Caco-2 (cell line): ENCODE measurements at regions of chr5 and their contacts with region 1.

Region 1: GRCh38 chr5:36646507-36647023 is 40.2 kb downstream of the SLC1A3 start:
- DNase-seq: peak in 1 of 2 experiments; percentile 33
- H3K4me3 ChIP-seq: no peak overlapping the region
- H3K4me3 Mint-ChIP-seq: peak overlapping the region; percentile 53
- H3K27ac Mint-ChIP-seq: peak overlapping the region; percentile 81
- H3K4me1 ChIP-seq: peaks cover 91% of the 10 kb centered on the region
- H3K4me1 Mint-ChIP-seq: peaks cover 42% of the 10 kb centered on the region
- H3K27me3 ChIP-seq: no peaks in the 10 kb centered on the region
- H3K27me3 Mint-ChIP-seq: no peaks in the 10 kb centered on the region
- CTCF ChIP-seq: no peak

Region 2: DNA sequence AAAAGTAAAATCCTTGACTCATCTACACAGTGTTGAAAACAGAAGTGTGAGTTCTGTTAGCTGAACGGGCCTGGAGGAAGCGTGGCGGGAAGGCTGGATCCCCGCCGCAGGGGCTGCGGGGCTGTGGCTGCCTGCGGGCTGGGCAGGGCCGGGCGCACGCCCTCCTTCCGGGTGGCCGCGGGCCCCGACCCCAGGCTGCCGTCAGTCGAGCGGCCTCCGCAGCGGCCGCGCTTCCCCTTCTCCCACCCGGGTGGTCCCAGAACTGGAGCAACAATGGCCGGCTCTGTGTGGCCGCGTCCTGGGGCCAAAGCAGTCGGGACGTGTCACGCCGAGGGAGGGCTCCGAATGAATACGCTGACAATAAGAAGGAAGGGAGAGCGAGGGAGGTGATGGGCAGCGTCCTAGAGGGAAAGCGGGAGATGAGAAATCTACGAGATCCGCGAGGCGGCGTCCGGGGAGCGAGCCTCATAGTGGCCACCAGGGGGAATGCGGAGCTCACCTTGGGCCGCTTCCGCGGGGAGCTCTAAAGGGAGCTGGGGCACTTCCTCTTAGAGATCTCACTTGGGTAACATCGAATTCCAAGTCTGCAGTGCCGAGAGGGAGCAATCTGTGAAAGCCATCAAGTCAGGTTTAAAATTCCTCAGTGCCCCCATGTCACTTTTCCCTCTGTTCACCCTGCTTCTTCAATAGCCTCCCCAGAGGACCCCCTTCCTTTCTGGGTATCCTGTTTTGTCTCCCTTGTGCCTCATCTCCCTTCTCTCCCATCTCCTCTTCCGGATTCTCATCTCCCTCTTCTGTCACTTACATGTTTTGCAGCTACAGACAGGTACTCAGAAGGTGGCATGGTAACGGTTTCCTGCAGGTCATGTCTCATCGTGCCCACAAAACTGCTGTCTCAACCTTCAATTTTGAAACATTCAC is 43.7 kb after region 1 on chr5:
- CTCF ChIA-PET with region 1: interaction called, 5 read pairs
- POLR2A ChIA-PET with region 1: interaction called, 7 read pairs
- intact Hi-C with region 1: loop called (anchors 1 kb)
- DNase-seq: peak; percentile 90 to 91
- H3K4me3 ChIP-seq: peak overlapping the region; percentile 71
- H3K4me3 Mint-ChIP-seq: peak overlapping the region; percentile 75
- H3K27ac Mint-ChIP-seq: peak overlapping the region; percentile 28
- H3K4me1 ChIP-seq: peaks cover 14% of the 10 kb centered on the region; the same call in 1 of the 2 replicates
- H3K4me1 Mint-ChIP-seq: peaks cover 10% of the 10 kb centered on the region
- H3K27me3 ChIP-seq: no peaks in the 10 kb centered on the region
- H3K27me3 Mint-ChIP-seq: no peaks in the 10 kb centered on the region
- CTCF ChIP-seq: peak; percentile 80 to 91